ENCODE measurements at regions of chr10 and their contacts with region 1.

Region 1: DNA sequence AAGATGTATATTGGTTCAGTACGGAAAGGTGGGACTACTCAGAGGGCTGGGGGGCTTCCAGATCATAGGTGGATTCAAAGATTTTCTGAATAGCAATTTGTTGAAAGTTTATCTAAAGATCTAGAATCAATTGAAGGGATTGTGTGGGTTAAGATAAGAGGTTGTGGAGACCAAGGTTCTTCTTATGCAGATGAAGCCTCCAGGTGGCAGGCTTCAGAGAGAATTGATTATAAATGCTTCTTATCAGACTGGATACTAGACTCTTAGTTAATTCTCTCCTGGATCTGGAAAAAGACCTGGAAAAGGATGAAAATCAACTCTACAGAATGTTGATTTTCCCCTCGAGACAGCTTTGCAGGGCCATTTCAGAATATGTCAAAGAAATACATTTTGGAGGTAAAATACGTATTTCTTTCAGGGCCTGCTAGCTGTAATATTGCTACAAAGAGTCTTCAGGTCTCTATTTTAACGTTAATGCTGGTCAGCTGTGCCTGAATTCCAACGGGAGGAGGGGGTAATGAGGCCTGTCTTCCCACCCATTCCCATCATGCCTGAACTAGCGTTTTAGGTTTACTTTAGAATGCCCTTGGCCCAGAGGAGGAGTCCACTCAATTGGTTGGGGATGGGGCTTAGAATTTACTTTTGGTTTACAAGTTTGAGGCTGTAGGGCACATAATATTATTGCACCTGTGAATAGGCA is 12.8 kb upstream of the GPR15LG start:
- DNase-seq: no peak
- CTCF ChIP-seq: no peak

Region 2: DNA sequence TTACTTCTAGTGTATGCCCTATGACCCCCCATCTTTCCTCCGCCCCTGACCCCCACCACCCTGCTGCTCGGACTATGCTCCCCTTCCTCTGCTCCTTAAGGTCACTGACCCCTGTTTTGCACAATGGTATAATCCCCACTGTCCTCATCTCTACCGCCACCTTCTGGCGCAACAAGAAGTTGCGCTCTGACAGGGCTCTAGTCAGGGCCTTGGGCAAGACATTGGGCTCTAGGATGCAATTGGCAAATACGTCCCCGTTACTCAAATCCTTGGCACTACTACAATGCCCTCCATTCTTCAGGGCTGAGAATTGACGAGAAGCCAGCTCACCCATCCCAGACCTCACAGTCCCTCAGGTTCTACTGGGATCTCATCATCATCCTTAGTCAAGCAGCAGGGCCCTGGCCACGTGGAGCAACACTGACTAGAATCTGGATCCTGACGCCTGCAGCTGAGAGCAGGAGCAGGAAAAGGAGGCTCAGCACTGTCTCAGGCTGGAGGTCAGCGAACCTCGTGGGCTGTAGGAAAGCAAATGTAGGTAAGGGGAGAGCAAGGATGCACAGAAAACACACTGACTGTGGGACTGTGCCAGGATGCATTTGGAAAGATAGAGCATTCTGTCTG is 53.9 kb after region 1 on chr10:
- in situ Hi-C with region 1: loop called (anchors 5 kb)
- DNase-seq: peak; percentile 74
- CTCF ChIP-seq: peak; percentile 65